ENCODE measurements at regions of chrX and their contacts with region 1.

Region 1: GRCh38 chrX:30570505-30570904 is 7.1 kb downstream of the TASL start:
- DNase-seq: no peak
- H3K4me3 Mint-ChIP-seq: no peak overlapping the region
- H3K27ac Mint-ChIP-seq: no peak overlapping the region
- H3K4me1 Mint-ChIP-seq: peaks cover 28% of the 10 kb centered on the region
- H3K27me3 Mint-ChIP-seq: no peaks in the 10 kb centered on the region

Region 2: DNA sequence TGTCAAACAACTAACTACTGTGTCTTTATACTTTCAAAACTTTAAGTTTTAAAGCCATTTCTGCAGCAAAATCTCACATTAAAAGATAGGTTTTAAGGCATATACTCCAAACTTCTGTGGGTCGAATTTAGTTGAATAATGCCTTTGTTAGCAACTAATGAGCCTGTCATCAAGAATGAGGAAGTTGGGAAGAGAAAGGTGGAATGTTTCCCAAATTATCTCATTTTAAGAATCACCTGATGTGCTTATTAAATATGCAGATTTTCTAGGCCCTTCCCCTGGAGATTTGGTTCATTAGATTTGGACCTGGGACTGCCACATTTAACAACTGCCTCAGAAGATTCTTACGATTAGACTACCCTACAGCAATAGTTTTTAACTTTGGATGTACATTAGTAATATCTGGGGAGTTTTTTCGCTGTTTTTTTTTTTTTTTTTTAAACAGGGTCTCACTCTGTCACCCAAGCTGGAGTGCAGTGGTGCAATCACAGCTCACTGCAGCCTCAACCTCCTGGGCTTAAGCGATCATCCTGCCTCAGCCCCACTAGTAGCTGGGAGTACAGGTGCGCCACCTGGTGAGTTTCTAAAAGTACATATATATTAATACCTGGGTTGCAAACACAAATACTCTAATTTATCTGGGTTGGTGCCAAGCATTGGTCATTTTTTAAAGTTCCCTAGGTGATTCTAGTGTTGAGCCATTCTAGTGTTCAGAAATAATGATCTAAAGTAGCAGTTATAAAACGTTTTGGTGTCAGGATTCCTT is 23.1 kb after region 1 on chrX:
- CTCF ChIA-PET with region 1: interaction called, 15 read pairs
- POLR2A ChIA-PET with region 1: no interaction called
- DNase-seq: peak; percentile 30
- H3K4me3 Mint-ChIP-seq: no peak overlapping the region
- H3K27ac Mint-ChIP-seq: no peak overlapping the region
- H3K4me1 Mint-ChIP-seq: peaks cover 9% of the 10 kb centered on the region
- H3K27me3 Mint-ChIP-seq: no peaks in the 10 kb centered on the region

Region 3: DNA sequence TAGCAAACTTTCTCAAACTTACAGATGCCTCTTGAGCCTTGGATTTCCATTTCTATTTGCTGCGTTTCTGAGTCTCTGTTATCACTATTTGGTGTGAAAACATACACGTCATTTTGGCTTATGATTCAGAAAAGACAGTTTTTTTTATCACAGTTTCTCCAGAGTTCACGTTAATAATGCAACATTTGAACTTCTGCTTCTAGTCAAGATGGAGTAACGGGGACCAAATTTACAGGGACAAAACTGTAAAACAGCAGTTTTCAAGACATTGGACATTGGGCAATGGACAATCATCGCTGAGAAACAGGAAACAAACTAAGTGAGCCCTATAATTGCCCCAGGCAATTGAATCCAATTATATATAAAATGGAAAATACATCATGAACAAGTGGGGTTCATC is 43.2 kb after region 1 on chrX:
- CTCF ChIA-PET with region 1: no interaction called
- POLR2A ChIA-PET with region 1: no interaction called
- DNase-seq: no peak
- H3K4me3 Mint-ChIP-seq: no peak overlapping the region
- H3K27ac Mint-ChIP-seq: no peak overlapping the region
- H3K4me1 Mint-ChIP-seq: peaks cover 2% of the 10 kb centered on the region
- H3K27me3 Mint-ChIP-seq: no peaks in the 10 kb centered on the region